MCF 10A (cell line): ENCODE measurements at regions of chr11 and their contacts with region 1.

Region 1: GRCh38 chr11:8566613-8567210 is 27.3 kb downstream of the STK33 start:
- DNase-seq: peak; percentile 59
- H3K4me3 Mint-ChIP-seq: no peak overlapping the region
- H3K27ac Mint-ChIP-seq: no peak overlapping the region
- H3K4me1 Mint-ChIP-seq: peaks cover 6% of the 10 kb centered on the region
- H3K27me3 Mint-ChIP-seq: peaks cover 38% of the 10 kb centered on the region
- CTCF ChIP-seq: peak; percentile 64

Region 2: GRCh38 chr11:8219257-8220021 is 347.3 kb before region 1 on chr11:
- CTCF ChIA-PET with region 1: interaction called, 48 read pairs
- POLR2A ChIA-PET with region 1: interaction called, 4 read pairs
- intact Hi-C with region 1: loop called (anchors 1 kb)
- DNase-seq: peak; percentile 65
- H3K4me3 Mint-ChIP-seq: no peak overlapping the region
- H3K27ac Mint-ChIP-seq: no peak overlapping the region
- H3K4me1 Mint-ChIP-seq: no peaks in the 10 kb centered on the region
- H3K27me3 Mint-ChIP-seq: peaks cover 14% of the 10 kb centered on the region
- CTCF ChIP-seq: peak; percentile 72

Region 3: GRCh38 chr11:8225589-8226036 is 341.1 kb before region 1 on chr11:
- CTCF ChIA-PET with region 1: interaction called, 48 read pairs
- POLR2A ChIA-PET with region 1: interaction called, 8 read pairs
- intact Hi-C with region 1: loop called (anchors 1 kb)
- DNase-seq: peak; percentile 63
- H3K4me3 Mint-ChIP-seq: no peak overlapping the region
- H3K27ac Mint-ChIP-seq: no peak overlapping the region
- H3K4me1 Mint-ChIP-seq: peaks cover 20% of the 10 kb centered on the region
- H3K27me3 Mint-ChIP-seq: no peaks in the 10 kb centered on the region
- CTCF ChIP-seq: peak; percentile 94

Region 4: DNA sequence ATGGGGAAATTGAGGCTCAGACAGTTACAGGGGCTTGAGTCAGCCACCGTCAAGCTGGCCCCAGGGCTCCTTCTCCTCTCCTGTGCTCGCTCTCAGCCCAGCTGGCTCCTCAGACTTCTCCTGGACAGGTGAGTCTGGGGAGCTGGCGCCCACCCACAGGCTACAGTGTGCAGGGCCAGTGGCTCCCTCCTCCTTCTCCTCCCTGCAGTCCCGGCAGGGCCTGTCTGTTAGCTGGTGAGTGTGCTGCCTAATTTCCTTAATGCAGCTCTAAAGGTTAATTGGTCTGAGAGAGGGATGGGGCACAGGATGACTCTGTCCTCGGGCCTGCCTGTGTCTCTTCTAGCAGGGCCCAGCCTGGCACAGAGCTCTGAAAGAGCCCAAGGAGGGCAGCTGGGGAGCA is 334.7 kb before region 1 on chr11:
- CTCF ChIA-PET with region 1: interaction called, 24 read pairs
- POLR2A ChIA-PET with region 1: interaction called, 8 read pairs
- intact Hi-C with region 1: no loop called
- DNase-seq: no peak
- H3K4me3 Mint-ChIP-seq: no peak overlapping the region
- H3K27ac Mint-ChIP-seq: no peak overlapping the region
- H3K4me1 Mint-ChIP-seq: peaks cover 32% of the 10 kb centered on the region
- H3K27me3 Mint-ChIP-seq: no peaks in the 10 kb centered on the region
- CTCF ChIP-seq: no peak

Region 5: DNA sequence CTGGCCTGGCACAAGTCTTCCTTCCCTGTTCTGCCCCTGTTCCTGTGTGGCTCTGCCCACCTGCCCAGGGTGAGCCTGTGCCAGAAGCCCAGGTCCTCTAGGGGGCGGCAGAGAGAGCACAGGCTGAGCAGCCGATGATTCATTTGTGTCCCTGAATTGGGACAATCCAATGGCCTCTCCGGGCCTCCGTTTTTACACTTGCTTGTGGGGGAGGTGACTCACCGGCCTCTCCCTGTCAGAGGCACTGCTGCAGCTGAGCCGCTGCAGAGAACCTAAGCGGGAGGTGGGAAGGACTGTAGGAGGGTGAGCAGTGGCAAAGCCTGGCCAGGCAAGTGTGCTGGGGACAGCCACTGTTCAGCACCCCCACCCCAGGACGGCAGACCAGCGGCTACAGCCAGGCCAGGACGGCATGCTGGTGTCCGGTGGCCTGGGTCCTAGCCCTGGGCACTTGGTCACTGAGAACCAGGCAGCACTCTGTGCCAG is 237.8 kb before region 1 on chr11:
- CTCF ChIA-PET with region 1: interaction called, 10 read pairs
- POLR2A ChIA-PET with region 1: interaction called, 3 read pairs
- intact Hi-C with region 1: loop called (anchors 2 kb)
- DNase-seq: peak; percentile 96
- H3K4me3 Mint-ChIP-seq: peak overlapping the region; percentile 50
- H3K27ac Mint-ChIP-seq: no peak overlapping the region
- H3K4me1 Mint-ChIP-seq: peaks cover 16% of the 10 kb centered on the region
- H3K27me3 Mint-ChIP-seq: no peaks in the 10 kb centered on the region
- CTCF ChIP-seq: peak; percentile 78

Region 6: DNA sequence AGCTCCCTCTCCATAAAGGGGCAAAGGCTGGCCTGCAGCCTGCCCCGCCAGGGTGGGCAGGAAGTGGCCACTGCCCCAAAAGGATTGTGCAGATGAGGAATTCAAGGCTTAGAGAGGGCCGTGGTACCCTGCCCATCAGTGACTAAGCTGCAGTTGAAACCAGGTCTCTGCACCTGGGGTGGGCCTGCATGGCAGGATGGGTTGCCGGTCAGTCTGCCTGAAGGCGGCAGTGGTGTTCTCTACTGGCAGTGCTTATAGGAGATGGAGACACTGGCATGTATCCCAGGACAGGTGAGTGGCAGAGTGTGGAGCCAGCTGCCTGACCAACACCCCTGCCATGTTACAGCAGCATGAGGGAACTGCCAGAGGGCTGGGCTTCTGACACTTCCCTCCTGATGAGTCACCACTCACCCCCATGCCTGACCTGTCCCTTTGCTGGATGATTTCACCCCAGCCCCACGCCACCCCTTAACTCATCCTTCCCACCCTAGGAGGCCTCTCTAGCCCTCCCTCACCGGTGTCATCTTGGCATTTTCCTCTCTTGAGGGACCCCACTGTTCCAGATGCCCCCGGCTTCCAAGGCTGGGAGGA is 232.8 kb before region 1 on chr11:
- CTCF ChIA-PET with region 1: interaction called, 10 read pairs
- POLR2A ChIA-PET with region 1: interaction called, 3 read pairs
- intact Hi-C with region 1: loop called (anchors 2 kb)
- DNase-seq: peak; percentile 93
- H3K4me3 Mint-ChIP-seq: no peak overlapping the region
- H3K27ac Mint-ChIP-seq: no peak overlapping the region
- H3K4me1 Mint-ChIP-seq: peaks cover 21% of the 10 kb centered on the region
- H3K27me3 Mint-ChIP-seq: no peaks in the 10 kb centered on the region
- CTCF ChIP-seq: peak; percentile 33

Region 7: DNA sequence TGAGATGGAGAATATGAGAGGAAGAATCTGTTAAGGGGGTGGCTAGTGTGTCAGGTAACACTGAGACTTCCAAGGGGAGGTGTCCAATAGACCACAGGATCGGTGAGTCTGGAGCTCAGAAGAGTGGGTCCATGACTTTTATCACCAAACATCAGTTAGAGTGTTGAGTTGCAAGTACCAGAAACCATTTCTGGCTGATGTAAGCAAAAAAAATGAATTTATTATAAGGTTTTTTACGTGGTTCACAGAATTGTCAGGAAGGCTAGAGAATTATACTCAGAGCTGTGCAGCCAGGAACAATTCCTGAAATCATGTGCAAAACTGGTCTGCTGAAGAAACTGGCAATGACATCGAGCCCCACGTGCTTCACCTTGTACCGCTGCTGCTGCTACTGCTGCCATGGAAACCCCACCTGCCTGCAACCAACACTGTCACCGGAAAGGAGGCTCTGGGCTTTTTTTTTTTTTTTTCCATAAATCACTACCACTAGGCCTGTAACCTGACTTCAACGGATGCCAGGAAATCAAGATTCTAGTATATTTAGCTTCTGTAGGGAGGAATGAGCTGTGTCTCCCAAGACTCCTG is 43.9 kb after region 1 on chr11:
- CTCF ChIA-PET with region 1: no interaction called
- POLR2A ChIA-PET with region 1: no interaction called
- intact Hi-C with region 1: no loop called
- DNase-seq: no peak
- H3K4me3 Mint-ChIP-seq: no peak overlapping the region
- H3K27ac Mint-ChIP-seq: peak overlapping the region; percentile 16
- H3K4me1 Mint-ChIP-seq: peaks cover 7% of the 10 kb centered on the region
- H3K27me3 Mint-ChIP-seq: no peaks in the 10 kb centered on the region
- CTCF ChIP-seq: no peak